H1 (cell line): ENCODE measurements at regions of chr10 and their contacts with region 1.

Region 1: DNA sequence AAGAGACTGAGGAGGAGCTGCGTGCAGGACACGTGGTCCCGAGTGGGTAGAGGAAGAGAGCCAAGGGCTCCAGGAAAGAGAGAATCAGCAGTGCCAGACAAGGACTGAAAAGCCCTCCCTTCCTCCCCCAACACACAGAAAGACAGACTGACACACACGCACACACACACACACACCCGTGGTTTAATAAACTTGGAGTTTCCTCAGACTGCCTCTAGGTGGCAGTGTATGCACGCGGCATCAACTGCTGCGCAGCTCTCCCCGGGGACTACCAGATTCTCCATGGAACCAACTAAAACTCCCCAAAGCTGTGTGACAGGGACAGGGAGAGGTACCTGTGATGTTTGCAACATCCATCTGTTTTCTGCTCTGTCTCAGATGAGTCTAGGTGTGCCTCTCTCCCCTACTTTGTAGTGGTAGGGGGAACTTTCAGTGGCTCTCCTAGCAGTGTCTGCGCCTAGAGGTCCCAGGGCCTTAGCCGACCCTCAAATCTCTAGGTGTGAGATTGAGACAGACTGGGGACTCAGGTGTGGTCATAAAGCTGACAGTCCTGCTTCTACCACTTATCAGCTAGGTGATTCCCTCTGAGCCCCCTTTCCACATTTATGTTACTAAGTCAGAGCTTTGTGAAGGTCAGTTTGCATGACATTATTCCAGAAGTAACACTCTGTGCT is 9.3 kb upstream of the TSPAN14 start:
- DNase-seq: peak in 1 of 2 experiments; percentile 58
- H3K4me3 ChIP-seq: no peak overlapping the region
- H3K27ac ChIP-seq: no peak overlapping the region
- H3K4me1 ChIP-seq: peaks cover 0 to 3% (median 0%) of the 10 kb centered on the region in 4 experiments; a peak in 1 of 7 replicates
- H3K27me3 ChIP-seq: no peaks in the 10 kb centered on the region
- CTCF ChIP-seq: peak; percentile 78 to 95 (median 87)
- EP300 ChIP-seq: no peak
- POLR2A ChIP-seq: no peak
- RAD21 ChIP-seq: peak; percentile 98

Region 2: DNA sequence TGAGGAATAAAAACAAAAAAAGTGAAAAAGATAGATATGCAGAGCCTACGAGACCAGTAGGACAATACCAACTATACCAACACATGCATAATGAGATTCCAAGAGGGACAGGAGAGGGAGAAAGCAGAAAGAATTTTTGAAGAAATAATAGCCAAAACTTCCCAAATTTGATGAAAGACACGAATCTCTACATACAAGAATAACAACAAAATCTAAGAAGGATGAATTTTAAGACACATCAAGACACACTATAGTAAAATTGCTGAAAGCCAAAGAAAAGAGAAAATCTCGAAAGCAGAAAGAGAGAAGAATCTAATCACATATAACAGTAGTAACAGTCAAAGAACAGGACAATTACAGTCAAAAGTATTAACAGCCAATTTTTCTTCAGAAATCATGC is 147.8 kb before region 1 on chr10:
- CTCF ChIA-PET with region 1: no interaction called
- POLR2A ChIA-PET with region 1: no interaction called
- DNase-seq: no peak
- H3K4me3 ChIP-seq: no peak overlapping the region
- H3K27ac ChIP-seq: no peak overlapping the region
- H3K4me1 ChIP-seq: no peaks in the 10 kb centered on the region
- H3K27me3 ChIP-seq: no peaks in the 10 kb centered on the region
- CTCF ChIP-seq: no peak
- EP300 ChIP-seq: no peak
- POLR2A ChIP-seq: no peak
- RAD21 ChIP-seq: no peak

Region 3: GRCh38 chr10:80382989-80383388 is 61.8 kb before region 1 on chr10:
- CTCF ChIA-PET with region 1: interaction called, 128 read pairs
- POLR2A ChIA-PET with region 1: no interaction called
- DNase-seq: peak in 1 of 2 experiments; percentile 49
- H3K4me3 ChIP-seq: no peak overlapping the region
- H3K27ac ChIP-seq: no peak overlapping the region
- H3K4me1 ChIP-seq: no peaks in the 10 kb centered on the region
- H3K27me3 ChIP-seq: no peaks in the 10 kb centered on the region
- CTCF ChIP-seq: peak in 2 of 3 experiments; percentile 58 to 78; a peak in 3 of 4 replicates
- EP300 ChIP-seq: no peak
- POLR2A ChIP-seq: no peak
- RAD21 ChIP-seq: peak; percentile 82 to 83

Region 4: GRCh38 chr10:80429521-80429966 is 15.2 kb before region 1 on chr10:
- CTCF ChIA-PET with region 1: interaction called, 72 read pairs
- POLR2A ChIA-PET with region 1: interaction called, 3 read pairs
- DNase-seq: no peak
- H3K4me3 ChIP-seq: no peak overlapping the region
- H3K27ac ChIP-seq: no peak overlapping the region
- H3K4me1 ChIP-seq: no peaks in the 10 kb centered on the region
- H3K27me3 ChIP-seq: no peaks in the 10 kb centered on the region
- CTCF ChIP-seq: no peak
- EP300 ChIP-seq: no peak
- POLR2A ChIP-seq: no peak
- RAD21 ChIP-seq: no peak

Region 5: GRCh38 chr10:80487791-80488538 is 43.2 kb after region 1 on chr10:
- CTCF ChIA-PET with region 1: interaction called, 24 read pairs
- POLR2A ChIA-PET with region 1: interaction called, 4 read pairs
- DNase-seq: no peak
- H3K4me3 ChIP-seq: no peak overlapping the region
- H3K27ac ChIP-seq: no peak overlapping the region
- H3K4me1 ChIP-seq: peaks cover 11 to 20% (median 15%) of the 10 kb centered on the region in 4 experiments
- H3K27me3 ChIP-seq: no peaks in the 10 kb centered on the region
- CTCF ChIP-seq: no peak
- EP300 ChIP-seq: no peak
- POLR2A ChIP-seq: no peak
- RAD21 ChIP-seq: no peak

Region 6: GRCh38 chr10:80498833-80499741 is 54.3 kb after region 1 on chr10:
- CTCF ChIA-PET with region 1: interaction called, 1,263 read pairs
- POLR2A ChIA-PET with region 1: no interaction called
- DNase-seq: no peak
- H3K4me3 ChIP-seq: no peak overlapping the region
- H3K27ac ChIP-seq: no peak overlapping the region
- H3K4me1 ChIP-seq: peaks cover 8 to 30% (median 15%) of the 10 kb centered on the region in 4 experiments
- H3K27me3 ChIP-seq: no peaks in the 10 kb centered on the region
- CTCF ChIP-seq: no peak
- EP300 ChIP-seq: no peak
- POLR2A ChIP-seq: no peak
- RAD21 ChIP-seq: no peak

Region 7: DNA sequence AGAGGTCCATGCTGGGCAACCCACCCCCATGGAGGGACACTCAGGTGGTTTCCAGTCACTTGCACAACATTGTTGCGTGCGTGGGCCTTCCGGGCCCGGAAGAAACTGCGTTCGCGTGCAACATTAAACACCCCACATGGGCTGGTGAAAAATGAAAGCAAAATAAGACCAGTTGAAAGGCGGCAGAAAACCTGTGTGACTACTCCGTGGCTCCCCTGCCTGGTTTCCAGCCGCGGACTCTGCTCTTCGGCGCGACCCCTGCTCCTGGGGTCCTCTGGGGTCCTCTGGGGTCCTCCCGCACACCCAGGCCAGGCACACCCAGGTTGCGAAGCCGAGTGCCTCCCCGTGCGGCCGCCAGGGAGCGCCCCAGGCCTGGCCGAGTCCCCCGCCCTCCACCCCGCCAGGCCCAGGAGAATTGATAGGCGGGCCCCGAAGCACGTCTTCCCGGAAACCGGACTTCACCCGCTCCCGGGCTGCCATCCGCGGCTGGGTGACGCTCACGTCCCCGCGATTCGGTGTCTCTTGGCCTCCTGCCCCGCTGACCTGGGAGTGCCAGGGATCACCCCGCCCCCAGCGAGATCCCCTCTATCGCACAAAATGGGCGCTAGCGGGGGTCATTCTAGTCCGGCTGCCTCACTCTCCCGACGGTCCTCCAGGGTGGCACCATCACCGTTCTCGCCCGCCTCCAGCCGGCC is 91.0 kb after region 1 on chr10:
- CTCF ChIA-PET with region 1: interaction called, 10 read pairs
- POLR2A ChIA-PET with region 1: no interaction called
- DNase-seq: peak; percentile 29 to 78
- H3K4me3 ChIP-seq: peak overlapping the region; percentile 24 to 42 (median 28); a peak in 4 of 8 replicates
- H3K27ac ChIP-seq: no peak overlapping the region
- H3K4me1 ChIP-seq: no peaks in the 10 kb centered on the region; a peak in 1 of 7 replicates
- H3K27me3 ChIP-seq: peaks cover 0 to 1% (median 0%) of the 10 kb centered on the region in 4 experiments; a peak in 1 of 7 replicates
- CTCF ChIP-seq: peak; percentile 40 to 54 (median 49)
- EP300 ChIP-seq: no peak
- POLR2A ChIP-seq: no peak
- RAD21 ChIP-seq: peak; percentile 41 to 63; a peak in 3 of 4 replicates